Naive thymus-derived CD4-positive, alpha-beta T cell (primary cell): ENCODE measurements at regions of chr17 and their contacts with region 1.

Region 1: GRCh38 chr17:10844621-10845387 is 6.9 kb upstream of the PIRT start:
- DNase-seq: peak; percentile 43 to 76 (median 70)
- ATAC-seq: peak; percentile 96
- H3K4me3 ChIP-seq: peak overlapping the region; percentile 52
- H3K4me3 Mint-ChIP-seq: peak overlapping the region; percentile 70 to 89 (median 86)
- H3K27ac ChIP-seq: no peak overlapping the region
- H3K27ac Mint-ChIP-seq: peak overlapping the region in 3 of 9 donors; percentile 26 to 46 (median 43)
- H3K4me1 ChIP-seq: peaks cover 0 to 6% of the 10 kb centered on the region in 2 donors
- H3K4me1 Mint-ChIP-seq: peaks cover 0 to 10% (median 10%) of the 10 kb centered on the region in 7 donors
- H3K27me3 ChIP-seq: no peaks in the 10 kb centered on the region
- H3K27me3 Mint-ChIP-seq: peaks cover 0 to 11% (median 0%) of the 10 kb centered on the region in 5 donors

Region 2: GRCh38 chr17:10646392-10646990 is 198.3 kb before region 1 on chr17:
- CTCF ChIA-PET with region 1: interaction called, 47 read pairs
- POLR2A ChIA-PET with region 1: interaction called, 4 read pairs
- intact Hi-C with region 1: loop called (anchors 1 kb)
- DNase-seq: peak; percentile 38 to 84 (median 67)
- ATAC-seq: peak; percentile 79
- H3K4me3 ChIP-seq: no peak overlapping the region
- H3K4me3 Mint-ChIP-seq: no peak overlapping the region
- H3K27ac ChIP-seq: no peak overlapping the region
- H3K27ac Mint-ChIP-seq: peak overlapping the region in 1 of 9 donors; percentile 9
- H3K4me1 ChIP-seq: no peaks in the 10 kb centered on the region
- H3K4me1 Mint-ChIP-seq: no peaks in the 10 kb centered on the region
- H3K27me3 ChIP-seq: no peaks in the 10 kb centered on the region
- H3K27me3 Mint-ChIP-seq: no peaks in the 10 kb centered on the region

Region 3: GRCh38 chr17:10697092-10698081 is 147.4 kb before region 1 on chr17 and contains the starts of genes ADPRM and SCO1:
- CTCF ChIA-PET with region 1: interaction called, 4 read pairs
- POLR2A ChIA-PET with region 1: interaction called, 3 read pairs
- intact Hi-C with region 1: loop called (anchors 1 kb)
- DNase-seq: peak; percentile 77 to 89 (median 85)
- ATAC-seq: peak; percentile 97
- H3K4me3 ChIP-seq: peak within 1 kb of the TSS; percentile 95
- H3K4me3 Mint-ChIP-seq: peak within 1 kb of the TSS; percentile 83 to 100 (median 95)
- H3K27ac ChIP-seq: peak within 1 kb of the TSS; percentile 97
- H3K27ac Mint-ChIP-seq: peak within 1 kb of the TSS; percentile 90 to 99 (median 96)
- H3K4me1 ChIP-seq: peaks cover 17 to 43% of the 10 kb centered on the region in 2 donors
- H3K4me1 Mint-ChIP-seq: peaks cover 34 to 77% (median 65%) of the 10 kb centered on the region in 7 donors
- H3K27me3 ChIP-seq: no peaks in the 10 kb centered on the region
- H3K27me3 Mint-ChIP-seq: no peaks in the 10 kb centered on the region
- total RNA-seq, gene ADPRM: 16.4 to 70.4 (median 32.1) TPM
- total RNA-seq, gene SCO1: 13.6 to 29.2 (median 26.7) TPM

Region 4: DNA sequence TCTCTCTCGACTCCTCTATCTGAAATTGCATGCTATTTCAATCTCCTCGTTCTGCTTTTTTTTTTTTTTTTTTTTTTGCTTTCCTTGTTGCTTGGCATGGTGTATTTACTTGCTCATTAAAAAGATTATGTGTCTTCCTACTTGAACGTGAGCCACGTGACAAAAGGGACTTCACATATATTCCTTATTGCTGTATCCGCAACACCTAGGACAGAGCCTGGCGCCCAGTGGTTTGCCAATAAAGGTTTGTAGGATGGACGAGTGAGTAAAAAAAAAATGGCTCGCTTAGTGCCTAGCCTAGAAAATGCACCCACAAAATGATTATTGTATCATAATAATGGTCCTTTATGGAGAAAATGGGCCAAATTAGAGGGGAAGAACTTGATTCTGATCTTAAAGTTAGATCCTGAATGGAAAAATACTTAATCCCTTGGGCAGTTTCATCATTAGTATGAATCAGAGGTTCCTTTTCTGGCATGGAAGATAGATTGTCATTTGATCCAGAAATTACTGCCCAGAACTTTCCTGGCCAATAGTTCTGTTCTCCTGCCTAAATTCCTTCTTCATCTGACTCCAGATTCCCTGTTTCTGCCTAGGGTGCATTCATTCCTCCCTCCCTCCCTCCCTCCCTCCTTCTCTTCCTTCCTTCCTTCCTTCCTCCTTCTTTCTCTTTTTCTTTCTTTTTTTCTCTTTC is 101.3 kb before region 1 on chr17:
- CTCF ChIA-PET with region 1: interaction called, 3 read pairs
- POLR2A ChIA-PET with region 1: interaction called, 3 read pairs
- intact Hi-C with region 1: loop called in 1 of 2 experiments (anchors 2 kb)
- DNase-seq: no peak
- ATAC-seq: no peak
- H3K4me3 ChIP-seq: no peak overlapping the region
- H3K4me3 Mint-ChIP-seq: no peak overlapping the region
- H3K27ac ChIP-seq: no peak overlapping the region
- H3K27ac Mint-ChIP-seq: peak overlapping the region in 5 of 9 donors; percentile 16 to 85 (median 47)
- H3K4me1 ChIP-seq: peaks cover 0 to 17% of the 10 kb centered on the region in 2 donors
- H3K4me1 Mint-ChIP-seq: peaks cover 7 to 30% (median 25%) of the 10 kb centered on the region in 7 donors
- H3K27me3 ChIP-seq: no peaks in the 10 kb centered on the region
- H3K27me3 Mint-ChIP-seq: peaks cover 0 to 21% (median 0%) of the 10 kb centered on the region in 5 donors